ENCODE measurements at regions of chr21 and their contacts with region 1.

Region 1: DNA sequence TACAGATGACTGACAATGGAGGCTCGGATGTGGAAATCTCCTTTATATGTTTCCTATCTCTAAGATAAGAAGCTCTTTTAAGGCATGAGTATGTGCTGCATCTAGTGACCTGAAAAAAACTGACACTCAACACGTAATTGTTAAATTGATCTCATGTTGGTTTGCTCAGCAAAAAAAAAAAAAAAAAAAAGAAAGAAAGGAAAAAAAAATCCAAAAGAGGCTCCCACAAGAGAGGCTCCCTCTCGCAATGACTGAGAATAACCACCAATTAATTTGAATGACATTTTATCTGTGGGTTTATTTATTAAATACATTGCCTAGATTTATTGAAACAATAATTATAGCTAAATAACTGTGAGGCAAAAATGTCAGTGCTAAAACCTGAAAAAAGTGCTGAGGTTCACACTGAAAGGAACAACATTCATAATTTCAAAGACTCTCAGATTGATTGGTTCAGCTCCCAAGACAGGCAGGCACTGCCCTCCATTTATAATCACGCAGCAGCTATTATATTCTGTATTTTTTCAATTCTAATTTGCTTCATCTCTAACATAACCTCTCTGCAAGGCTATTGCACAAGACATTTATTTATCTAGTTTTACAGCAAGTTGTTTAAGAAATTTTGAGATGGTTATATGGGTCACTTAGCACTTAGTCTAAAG is 184.5 kb upstream of the TMPRSS15 start:
- DNase-seq: no peak
- H3K4me3 ChIP-seq: no peak overlapping the region
- H3K27ac ChIP-seq: no peak overlapping the region
- H3K4me1 ChIP-seq: no peaks in the 10 kb centered on the region
- H3K27me3 ChIP-seq: no peaks in the 10 kb centered on the region
- CTCF ChIP-seq: no peak
- POLR2A ChIP-seq: no peak

Region 2: DNA sequence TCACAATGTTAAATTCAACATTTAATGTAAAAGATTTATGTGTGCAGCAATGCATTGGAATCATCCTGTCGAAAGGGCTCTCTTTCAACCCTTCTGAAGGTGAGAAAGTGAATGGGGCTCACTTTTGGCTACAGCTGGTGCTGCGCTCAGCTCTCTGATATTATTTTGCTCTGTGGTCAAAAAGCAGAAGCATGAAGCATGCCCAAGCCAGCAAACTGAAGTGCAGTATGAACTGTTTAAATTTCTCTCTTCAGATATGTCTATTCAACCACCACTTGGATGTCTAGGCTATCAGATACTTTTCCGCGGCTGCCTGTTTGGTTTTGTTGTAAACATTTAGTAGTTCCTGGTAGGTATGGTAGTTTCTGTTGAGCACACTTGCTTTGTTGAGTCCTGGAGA is 32.3 kb after region 1 on chr21:
- intact Hi-C with region 1: loop called (anchors 5 kb)
- DNase-seq: no peak
- H3K4me3 ChIP-seq: no peak overlapping the region
- H3K27ac ChIP-seq: no peak overlapping the region
- H3K4me1 ChIP-seq: no peaks in the 10 kb centered on the region
- H3K27me3 ChIP-seq: no peaks in the 10 kb centered on the region
- CTCF ChIP-seq: no peak
- POLR2A ChIP-seq: no peak

Region 3: DNA sequence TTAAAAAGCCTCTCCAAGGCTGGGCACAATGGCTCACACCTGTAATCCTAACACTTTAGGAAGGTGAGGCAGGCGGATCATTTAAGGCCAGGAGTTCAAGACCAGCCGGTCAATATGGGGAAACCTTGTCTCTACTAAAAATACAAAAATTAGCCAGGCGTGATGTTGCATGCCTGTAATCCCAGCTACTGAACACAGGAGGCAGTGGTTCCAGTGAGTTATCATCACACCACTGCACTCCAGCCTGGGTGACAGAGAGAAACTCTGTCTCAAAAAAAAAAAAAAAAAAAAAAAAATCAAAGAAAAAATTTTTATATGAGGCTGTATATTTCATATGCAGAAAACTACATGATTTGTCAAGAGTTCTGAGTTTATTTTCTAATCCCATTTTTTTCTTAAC is 922.5 kb after region 1 on chr21:
- intact Hi-C with region 1: no loop called
- DNase-seq: no peak
- H3K4me3 ChIP-seq: no peak overlapping the region
- H3K27ac ChIP-seq: no peak overlapping the region
- H3K4me1 ChIP-seq: no peaks in the 10 kb centered on the region
- H3K27me3 ChIP-seq: no peaks in the 10 kb centered on the region
- CTCF ChIP-seq: no peak
- POLR2A ChIP-seq: no peak